GM12878 (cell line): ENCODE measurements at regions of chr12 and their contacts with region 1.

Region 1: GRCh38 chr12:54984658-54985376 is at the start of gene TESPA1:
- DNase-seq: peak; percentile 90
- ATAC-seq: peak; percentile 95
- H3K4me3 ChIP-seq: peak within 1 kb of the TSS; percentile 80
- H3K27ac ChIP-seq: peak within 1 kb of the TSS; percentile 94
- H3K4me1 ChIP-seq: peaks cover 26% of the 10 kb centered on the region
- H3K27me3 ChIP-seq: no peaks in the 10 kb centered on the region
- CTCF ChIP-seq: no peak
- EP300 ChIP-seq: no peak
- POLR2A ChIP-seq: peak; percentile 91
- RAD21 ChIP-seq: no peak
- polyA plus RNA-seq, gene TESPA1: 13.8 to 16.1 TPM

Region 2: GRCh38 chr12:54439521-54440255 is 545.1 kb before region 1 on chr12:
- CTCF ChIA-PET with region 1: no interaction called
- POLR2A ChIA-PET with region 1: no interaction called
- RAD21 ChIA-PET with region 1: no interaction called
- SMC1A ChIA-PET with region 1: no interaction called
- in situ Hi-C with region 1: no loop called
- intact Hi-C with region 1: no loop called
- DNase-seq: no peak
- ATAC-seq: peak; percentile 72
- H3K4me3 ChIP-seq: no peak overlapping the region
- H3K27ac ChIP-seq: no peak overlapping the region
- H3K4me1 ChIP-seq: 0 out of 2 replicates have a peak, but pooled peaks cover 7% of the 10 kb centered on the region
- H3K27me3 ChIP-seq: no peaks in the 10 kb centered on the region; a peak in 1 of 4 replicates
- CTCF ChIP-seq: peak; percentile 76 to 85 (median 77)
- EP300 ChIP-seq: no peak
- POLR2A ChIP-seq: no peak
- RAD21 ChIP-seq: peak; percentile 92

Region 3: GRCh38 chr12:54967461-54967860 is 17.4 kb before region 1 on chr12:
- CTCF ChIA-PET with region 1: interaction called, 29 read pairs
- POLR2A ChIA-PET with region 1: interaction called, 12 read pairs
- RAD21 ChIA-PET with region 1: interaction called, 4 read pairs
- SMC1A ChIA-PET with region 1: interaction called, 34 read pairs
- in situ Hi-C with region 1: no loop called
- intact Hi-C with region 1: no loop called
- DNase-seq: no peak
- ATAC-seq: no peak
- H3K4me3 ChIP-seq: no peak overlapping the region
- H3K27ac ChIP-seq: no peak overlapping the region
- H3K4me1 ChIP-seq: no peaks in the 10 kb centered on the region
- H3K27me3 ChIP-seq: no peaks in the 10 kb centered on the region
- CTCF ChIP-seq: no peak
- EP300 ChIP-seq: no peak
- POLR2A ChIP-seq: no peak
- RAD21 ChIP-seq: no peak

Region 4: DNA sequence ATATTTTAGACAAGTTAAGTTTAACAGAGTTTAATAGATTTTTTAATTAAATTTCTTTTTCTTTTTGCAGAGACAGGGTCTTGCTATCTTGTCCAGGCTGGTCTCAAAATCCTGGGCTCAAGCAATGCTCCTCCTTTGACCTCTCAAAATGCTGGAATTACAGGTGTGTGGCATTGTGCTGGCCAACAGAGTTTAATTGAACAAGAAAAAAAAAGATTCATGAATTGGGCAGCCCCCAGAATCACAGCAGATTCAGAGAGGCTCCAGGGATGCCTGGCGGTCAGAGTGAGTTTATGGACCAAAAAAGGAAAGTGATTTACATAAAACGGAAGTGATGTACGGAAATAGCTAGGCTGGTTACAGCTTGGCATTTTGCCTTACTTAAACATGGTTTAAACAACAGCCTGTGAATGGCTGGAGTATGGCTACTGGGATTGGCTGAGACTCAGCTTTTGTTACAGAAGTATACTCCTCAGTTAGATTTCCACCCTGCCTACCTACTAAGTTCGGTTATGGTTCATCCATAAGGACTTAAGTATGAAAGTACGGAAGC is 14.2 kb after region 1 on chr12:
- CTCF ChIA-PET with region 1: interaction called, 50 read pairs
- POLR2A ChIA-PET with region 1: no interaction called
- RAD21 ChIA-PET with region 1: interaction called, 33 read pairs
- SMC1A ChIA-PET with region 1: interaction called, 35 read pairs
- in situ Hi-C with region 1: no loop called
- intact Hi-C with region 1: no loop called
- DNase-seq: no peak
- ATAC-seq: no peak
- H3K4me3 ChIP-seq: no peak overlapping the region
- H3K27ac ChIP-seq: no peak overlapping the region
- H3K4me1 ChIP-seq: no peaks in the 10 kb centered on the region; the same call in 1 of the 2 replicates
- H3K27me3 ChIP-seq: no peaks in the 10 kb centered on the region
- CTCF ChIP-seq: no peak
- EP300 ChIP-seq: no peak
- POLR2A ChIP-seq: no peak
- RAD21 ChIP-seq: no peak

Region 5: GRCh38 chr12:55008944-55009585 is 24.2 kb after region 1 on chr12:
- CTCF ChIA-PET with region 1: no interaction called
- POLR2A ChIA-PET with region 1: no interaction called
- RAD21 ChIA-PET with region 1: no interaction called
- SMC1A ChIA-PET with region 1: no interaction called
- in situ Hi-C with region 1: no loop called
- intact Hi-C with region 1: no loop called
- DNase-seq: no peak
- ATAC-seq: no peak
- H3K4me3 ChIP-seq: no peak overlapping the region
- H3K27ac ChIP-seq: no peak overlapping the region
- H3K4me1 ChIP-seq: no peaks in the 10 kb centered on the region
- H3K27me3 ChIP-seq: no peaks in the 10 kb centered on the region
- CTCF ChIP-seq: no peak
- EP300 ChIP-seq: no peak
- POLR2A ChIP-seq: no peak
- RAD21 ChIP-seq: no peak

Region 6: GRCh38 chr12:55019779-55020178 is 35.0 kb after region 1 on chr12 and contains the start of gene NEUROD4:
- CTCF ChIA-PET with region 1: no interaction called
- POLR2A ChIA-PET with region 1: no interaction called
- RAD21 ChIA-PET with region 1: no interaction called
- SMC1A ChIA-PET with region 1: no interaction called
- in situ Hi-C with region 1: no loop called
- intact Hi-C with region 1: no loop called
- DNase-seq: no peak
- ATAC-seq: peak; percentile 87
- H3K4me3 ChIP-seq: no peak within 1 kb of the TSS
- H3K27ac ChIP-seq: no peak within 1 kb of the TSS
- H3K4me1 ChIP-seq: no peaks in the 10 kb centered on the region
- H3K27me3 ChIP-seq: no peaks in the 10 kb centered on the region; a peak in 1 of 4 replicates
- CTCF ChIP-seq: no peak
- EP300 ChIP-seq: no peak
- POLR2A ChIP-seq: no peak
- RAD21 ChIP-seq: no peak
- polyA plus RNA-seq, gene NEUROD4: not detected